Activated T-helper 1 cell treated with anti-CD3 and anti-CD28 coated beads, Interleukin-12 subunit alpha, Interleukin-12 subunit beta, Interleukin-2, Interleukin-4 antibody, amounts not matched to agents 30 ng/mL and 10 ng/mL and 1 ng/mL, durations not matched to agents 14 hours and 24 hours and 36 hours (primary cell): ENCODE measurements at regions of chr11 and their contacts with region 1.

Region 1: GRCh38 chr11:111777094-111778046 is 11.2 kb upstream of the PPP2R1B start:
- DNase-seq: peak; percentile 8
- H3K4me3 Mint-ChIP-seq: no peak overlapping the region
- H3K27ac Mint-ChIP-seq: no peak overlapping the region
- H3K4me1 Mint-ChIP-seq: no peaks in the 10 kb centered on the region
- H3K27me3 Mint-ChIP-seq: no peaks in the 10 kb centered on the region

Region 2: GRCh38 chr11:111283945-111284481 is 493.4 kb before region 1 on chr11:
- intact Hi-C with region 1: loop called (anchors 5 kb)
- DNase-seq: no peak
- H3K4me3 Mint-ChIP-seq: no peak overlapping the region
- H3K27ac Mint-ChIP-seq: no peak overlapping the region
- H3K4me1 Mint-ChIP-seq: no peaks in the 10 kb centered on the region
- H3K27me3 Mint-ChIP-seq: peaks cover 4% of the 10 kb centered on the region

Region 3: GRCh38 chr11:111454561-111455192 is 322.7 kb before region 1 on chr11:
- intact Hi-C with region 1: loop called (anchors 1 kb)
- DNase-seq: peak; percentile 16
- H3K4me3 Mint-ChIP-seq: no peak overlapping the region
- H3K27ac Mint-ChIP-seq: no peak overlapping the region
- H3K4me1 Mint-ChIP-seq: no peaks in the 10 kb centered on the region
- H3K27me3 Mint-ChIP-seq: peaks cover 7% of the 10 kb centered on the region

Region 4: GRCh38 chr11:111565114-111565720 is 212.2 kb before region 1 on chr11:
- intact Hi-C with region 1: loop called (anchors 1 kb)
- DNase-seq: peak; percentile 28
- H3K4me3 Mint-ChIP-seq: no peak overlapping the region
- H3K27ac Mint-ChIP-seq: no peak overlapping the region
- H3K4me1 Mint-ChIP-seq: no peaks in the 10 kb centered on the region
- H3K27me3 Mint-ChIP-seq: no peaks in the 10 kb centered on the region

Region 5: GRCh38 chr11:111586388-111586831 is 191.0 kb before region 1 on chr11:
- intact Hi-C with region 1: loop called (anchors 1 kb)
- DNase-seq: no peak
- H3K4me3 Mint-ChIP-seq: no peak overlapping the region
- H3K27ac Mint-ChIP-seq: no peak overlapping the region
- H3K4me1 Mint-ChIP-seq: no peaks in the 10 kb centered on the region
- H3K27me3 Mint-ChIP-seq: peaks cover 6% of the 10 kb centered on the region

Region 6: GRCh38 chr11:111652184-111652583 is 125.2 kb before region 1 on chr11:
- intact Hi-C with region 1: no loop called
- DNase-seq: no peak
- H3K4me3 Mint-ChIP-seq: no peak overlapping the region
- H3K27ac Mint-ChIP-seq: no peak overlapping the region
- H3K4me1 Mint-ChIP-seq: no peaks in the 10 kb centered on the region
- H3K27me3 Mint-ChIP-seq: no peaks in the 10 kb centered on the region

Region 7: GRCh38 chr11:111766093-111766833 is 11.1 kb before region 1 on chr11 and contains the start of gene PPP2R1B:
- intact Hi-C with region 1: loop called (anchors 1 kb)
- DNase-seq: peak; percentile 60
- H3K4me3 Mint-ChIP-seq: peak within 1 kb of the TSS; percentile 96
- H3K27ac Mint-ChIP-seq: peak within 1 kb of the TSS; percentile 97
- H3K4me1 Mint-ChIP-seq: peaks cover 43% of the 10 kb centered on the region
- H3K27me3 Mint-ChIP-seq: no peaks in the 10 kb centered on the region
- total RNA-seq, gene PPP2R1B: 58.1 and 61.4 TPM in 2 replicates

Region 8: GRCh38 chr11:111841370-111842053 is 64.1 kb after region 1 on chr11:
- intact Hi-C with region 1: loop called (anchors 1 kb)
- DNase-seq: peak; percentile 70
- H3K4me3 Mint-ChIP-seq: no peak overlapping the region
- H3K27ac Mint-ChIP-seq: no peak overlapping the region
- H3K4me1 Mint-ChIP-seq: peaks cover 16% of the 10 kb centered on the region
- H3K27me3 Mint-ChIP-seq: no peaks in the 10 kb centered on the region